ENCODE measurements at regions of chr14 and their contacts with region 1.

Region 1: DNA sequence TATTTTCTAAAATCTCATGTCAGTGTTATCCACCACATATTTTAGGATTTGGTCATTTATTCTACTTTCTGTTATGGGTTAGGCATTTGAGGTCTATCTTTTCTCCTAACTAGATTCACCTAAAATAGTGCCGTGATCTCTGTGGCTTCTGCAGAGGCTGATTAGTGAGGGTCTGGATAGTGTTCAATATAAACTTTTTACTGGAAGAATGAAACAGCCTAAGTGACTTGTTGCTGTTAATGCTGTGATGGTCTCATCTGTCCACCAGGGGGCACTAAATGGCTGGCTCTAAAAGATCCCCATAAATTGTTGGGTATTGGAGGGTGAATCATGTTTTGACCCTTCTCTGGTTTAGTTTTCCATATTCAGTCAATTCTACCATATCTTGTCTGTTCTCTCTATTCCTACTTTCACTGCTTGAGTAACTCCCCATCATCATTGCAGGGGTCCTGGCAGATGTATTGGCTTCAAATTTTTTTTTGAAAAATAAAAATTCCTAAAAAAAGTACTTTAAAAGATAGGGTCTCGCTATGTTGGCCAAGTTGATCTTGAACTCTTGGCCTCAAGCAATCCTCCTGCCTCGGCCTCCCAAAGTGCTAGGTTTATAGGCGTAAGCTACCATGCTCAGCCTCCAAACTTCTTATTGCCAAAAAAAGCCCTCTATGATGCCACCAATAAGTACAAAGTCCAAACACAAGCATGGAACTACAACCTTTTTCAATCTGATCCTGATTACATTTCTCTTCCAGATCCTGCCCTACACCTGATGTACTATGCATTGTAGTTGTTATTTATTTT is 6.9 kb downstream of the PABPN1 start:
- DNase-seq: peak; percentile 47
- H3K4me3 ChIP-seq: no peak overlapping the region
- H3K27ac ChIP-seq: no peak overlapping the region
- H3K4me1 ChIP-seq: peaks cover 12% of the 10 kb centered on the region
- H3K27me3 ChIP-seq: no peaks in the 10 kb centered on the region
- CTCF ChIP-seq: peak; percentile 92

Region 2: GRCh38 chr14:23275412-23275811 is 52.7 kb before region 1 on chr14:
- intact Hi-C with region 1: no loop called
- DNase-seq: no peak
- H3K4me3 ChIP-seq: no peak overlapping the region
- H3K27ac ChIP-seq: no peak overlapping the region
- H3K4me1 ChIP-seq: peaks cover 9% of the 10 kb centered on the region
- H3K27me3 ChIP-seq: no peaks in the 10 kb centered on the region
- CTCF ChIP-seq: no peak

Region 3: GRCh38 chr14:23379366-23380196 is 51.4 kb after region 1 on chr14:
- intact Hi-C with region 1: loop called (anchors 5 kb)
- DNase-seq: peak; percentile 60
- H3K4me3 ChIP-seq: no peak overlapping the region
- H3K27ac ChIP-seq: peak overlapping the region; percentile 48
- H3K4me1 ChIP-seq: peaks cover 17% of the 10 kb centered on the region
- H3K27me3 ChIP-seq: peaks cover 7% of the 10 kb centered on the region
- CTCF ChIP-seq: peak; percentile 88

Region 4: DNA sequence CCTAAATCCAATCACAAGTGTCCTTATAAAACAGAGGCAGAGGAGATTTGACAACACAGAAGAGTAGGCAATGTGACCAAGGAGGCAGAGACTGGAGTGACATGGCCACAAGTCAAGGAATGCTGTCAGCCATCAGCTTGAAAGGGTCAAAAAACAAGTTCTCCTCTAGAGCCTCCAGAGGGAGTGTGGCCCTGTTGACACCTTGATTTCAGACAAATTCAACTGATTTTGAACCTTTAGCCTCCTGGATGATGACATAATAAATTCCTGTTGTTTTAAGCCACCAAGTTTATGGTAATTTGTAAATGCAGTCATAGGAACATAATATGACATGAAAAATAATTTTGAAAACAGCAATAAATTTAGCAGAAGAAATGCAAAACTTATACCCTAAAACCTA is 132.8 kb after region 1 on chr14:
- intact Hi-C with region 1: loop called (anchors 5 kb)
- DNase-seq: no peak
- H3K4me3 ChIP-seq: no peak overlapping the region
- H3K27ac ChIP-seq: no peak overlapping the region
- H3K4me1 ChIP-seq: no peaks in the 10 kb centered on the region
- H3K27me3 ChIP-seq: peaks cover 8% of the 10 kb centered on the region
- CTCF ChIP-seq: no peak

Measured in left ventricle myocardium inferior (tissue), 1 donor.